WTC11 (cell line): ENCODE measurements at regions of chr13 and their contacts with region 1.

Region 1: DNA sequence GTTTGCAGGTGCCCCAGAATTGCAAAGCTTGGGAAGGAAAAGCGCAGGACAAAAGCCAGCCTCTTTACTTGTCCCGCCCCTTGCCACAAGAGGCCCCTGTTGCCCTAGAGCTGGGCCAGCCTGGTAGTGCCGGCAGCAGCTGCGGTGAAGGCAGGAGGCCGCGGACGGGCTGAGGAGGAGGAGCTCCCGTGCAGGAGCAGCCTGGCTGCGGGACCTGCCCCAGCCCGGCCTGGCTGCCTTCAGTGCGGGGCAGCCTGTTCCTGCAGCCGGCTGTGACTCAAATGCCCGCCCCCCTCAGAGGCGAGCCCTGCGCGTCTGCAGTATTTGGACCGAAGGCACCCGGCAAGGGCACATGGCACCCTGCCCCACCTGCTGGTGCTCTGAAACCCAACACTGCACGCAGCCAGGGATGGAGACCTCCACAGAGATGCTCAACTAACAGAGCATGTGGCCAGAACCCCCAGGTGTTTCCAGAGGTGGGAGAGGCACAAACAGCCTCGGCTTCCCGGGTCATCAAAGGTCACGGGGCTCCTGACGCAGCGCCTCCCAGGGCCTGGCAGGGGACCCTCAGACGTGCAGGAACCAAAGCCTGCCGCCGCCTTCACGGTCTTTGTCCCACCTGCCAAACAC is 29.7 kb downstream of the NAXD start:
- DNase-seq: peak; percentile 89
- ATAC-seq: peak; percentile 97
- H3K4me3 Mint-ChIP-seq: no peak overlapping the region
- H3K27ac Mint-ChIP-seq: no peak overlapping the region
- H3K4me1 Mint-ChIP-seq: peaks cover 4% of the 10 kb centered on the region
- H3K27me3 Mint-ChIP-seq: no peaks in the 10 kb centered on the region
- CTCF ChIP-seq: 0 out of 2 replicates have a peak, but pooled peaks have one; percentile 24

Region 2: DNA sequence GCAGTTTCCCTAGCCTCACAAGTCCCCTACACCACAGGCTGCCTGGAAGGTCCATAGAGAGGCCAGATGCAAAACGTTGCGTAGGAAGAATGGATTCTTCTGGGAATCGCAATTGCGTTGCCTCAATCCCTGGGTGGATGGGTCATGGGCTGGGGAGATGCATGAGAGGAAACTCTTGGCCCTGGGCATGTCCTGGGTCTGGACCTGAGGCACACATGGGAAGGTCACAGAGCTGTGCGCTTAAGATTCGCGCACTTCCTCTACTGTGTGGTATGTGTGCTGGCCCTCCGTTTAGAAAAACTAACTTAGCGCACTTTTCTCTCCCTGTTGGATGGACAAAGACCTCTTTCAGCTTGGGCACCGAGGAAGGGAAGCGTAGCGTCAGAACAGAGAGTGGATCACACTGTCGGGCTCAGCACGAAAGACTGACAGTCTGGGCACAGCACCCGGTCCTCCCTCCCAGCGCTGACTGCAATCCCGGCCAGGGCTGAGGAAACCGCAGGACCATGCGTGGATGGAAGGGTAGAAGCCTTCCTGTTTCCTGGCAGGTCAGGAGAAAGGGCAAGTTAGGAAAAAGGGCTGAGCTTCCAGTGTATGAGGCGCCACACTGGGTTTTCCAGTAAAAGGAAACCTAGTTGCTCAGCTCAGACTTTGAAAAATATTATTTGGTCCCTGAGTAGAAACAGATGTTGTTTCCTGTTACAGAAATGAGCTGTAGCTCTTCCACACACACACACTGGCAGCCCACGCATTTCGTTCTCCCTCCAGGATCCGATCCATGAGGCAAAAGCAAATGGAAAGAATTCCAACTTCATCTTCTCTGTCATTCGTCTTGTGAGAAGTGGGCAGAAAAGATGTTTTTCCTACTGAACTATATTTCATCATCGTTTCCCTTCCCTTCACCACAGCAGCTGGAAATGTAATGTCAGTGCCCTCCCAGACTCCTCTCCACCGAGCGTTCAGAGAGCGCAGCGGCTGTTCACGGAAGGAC is 154.5 kb after region 1 on chr13:
- CTCF ChIA-PET with region 1: interaction called, 12 read pairs
- POLR2A ChIA-PET with region 1: no interaction called
- DNase-seq: no peak
- ATAC-seq: no peak
- H3K4me3 Mint-ChIP-seq: no peak overlapping the region
- H3K27ac Mint-ChIP-seq: no peak overlapping the region
- H3K4me1 Mint-ChIP-seq: peaks cover 30% of the 10 kb centered on the region
- H3K27me3 Mint-ChIP-seq: peaks cover 19% of the 10 kb centered on the region
- CTCF ChIP-seq: no peak

Region 3: GRCh38 chr13:110915057-110915873 is 270.3 kb after region 1 on chr13 and contains the start of gene ANKRD10:
- CTCF ChIA-PET with region 1: interaction called, 11 read pairs
- POLR2A ChIA-PET with region 1: interaction called, 4 read pairs
- DNase-seq: peak; percentile 99
- ATAC-seq: peak; percentile 93
- H3K4me3 Mint-ChIP-seq: peak within 1 kb of the TSS; percentile 92
- H3K27ac Mint-ChIP-seq: peak within 1 kb of the TSS; percentile 92
- H3K4me1 Mint-ChIP-seq: peaks cover 41% of the 10 kb centered on the region
- H3K27me3 Mint-ChIP-seq: no peaks in the 10 kb centered on the region
- CTCF ChIP-seq: peak; percentile 58; the same call in 1 of the 2 replicates
- total RNA-seq, gene ANKRD10: 176 to 219 TPM (median 191 TPM) in 3 replicates

Region 4: GRCh38 chr13:110925023-110925612 is 280.1 kb after region 1 on chr13:
- CTCF ChIA-PET with region 1: interaction called, 15 read pairs
- POLR2A ChIA-PET with region 1: no interaction called
- DNase-seq: peak; percentile 28
- ATAC-seq: peak; percentile 38
- H3K4me3 Mint-ChIP-seq: no peak overlapping the region
- H3K27ac Mint-ChIP-seq: no peak overlapping the region
- H3K4me1 Mint-ChIP-seq: peaks cover 26% of the 10 kb centered on the region
- H3K27me3 Mint-ChIP-seq: peaks cover 8% of the 10 kb centered on the region; the same call in 1 of the 2 replicates
- CTCF ChIP-seq: no peak